GM12878 (cell line): ENCODE measurements at regions of chr11 and their contacts with region 1.

Region 1: DNA sequence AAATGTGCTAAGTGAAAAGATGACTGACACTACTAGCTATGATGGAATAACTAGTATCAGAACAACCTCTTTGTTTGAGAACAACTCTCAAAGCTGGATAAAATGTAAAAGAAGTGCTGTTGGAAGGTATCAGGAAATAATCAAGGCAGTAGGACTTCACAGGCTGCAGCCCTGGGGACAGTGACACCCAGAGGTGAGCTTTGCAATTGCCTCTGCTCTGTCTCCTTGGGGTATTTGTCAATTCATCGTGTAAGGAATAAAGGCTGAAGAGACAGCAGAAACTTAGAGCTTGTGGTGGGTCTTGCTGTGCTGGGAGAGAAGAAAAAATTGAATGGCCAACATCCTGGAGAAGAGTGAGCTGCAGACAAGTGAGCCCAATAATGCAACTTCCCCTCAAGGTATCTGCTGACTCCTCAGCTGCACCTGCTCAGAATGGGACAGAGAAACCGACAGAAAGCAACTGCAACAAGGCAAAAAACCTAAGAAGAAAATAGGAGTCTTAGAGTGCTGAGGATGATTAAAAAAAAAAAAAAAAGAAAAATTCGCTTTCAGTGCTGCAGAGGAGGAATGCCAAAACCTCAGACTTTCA is 141.1 kb downstream of the RCN1 start:
- DNase-seq: no peak
- ATAC-seq: peak; percentile 94
- H3K4me3 ChIP-seq: no peak overlapping the region
- H3K27ac ChIP-seq: no peak overlapping the region
- H3K4me1 ChIP-seq: no peaks in the 10 kb centered on the region
- H3K27me3 ChIP-seq: no peaks in the 10 kb centered on the region
- CTCF ChIP-seq: peak; percentile 66 to 88 (median 86)
- EP300 ChIP-seq: no peak
- POLR2A ChIP-seq: no peak
- RAD21 ChIP-seq: peak; percentile 45

Region 2: GRCh38 chr11:32244453-32244852 is 12.5 kb after region 1 on chr11:
- CTCF ChIA-PET with region 1: interaction called, 15 read pairs
- POLR2A ChIA-PET with region 1: no interaction called
- RAD21 ChIA-PET with region 1: interaction called, 4 read pairs
- SMC1A ChIA-PET with region 1: interaction called, 5 read pairs
- in situ Hi-C with region 1: no loop called
- intact Hi-C with region 1: no loop called
- DNase-seq: no peak
- ATAC-seq: no peak
- H3K4me3 ChIP-seq: no peak overlapping the region
- H3K27ac ChIP-seq: no peak overlapping the region
- H3K4me1 ChIP-seq: no peaks in the 10 kb centered on the region
- H3K27me3 ChIP-seq: no peaks in the 10 kb centered on the region
- CTCF ChIP-seq: no peak
- EP300 ChIP-seq: no peak
- POLR2A ChIP-seq: no peak
- RAD21 ChIP-seq: no peak